Prostate gland (tissue), 2 donors: ENCODE measurements at regions of chr7 and their contacts with region 1.

Region 1: DNA sequence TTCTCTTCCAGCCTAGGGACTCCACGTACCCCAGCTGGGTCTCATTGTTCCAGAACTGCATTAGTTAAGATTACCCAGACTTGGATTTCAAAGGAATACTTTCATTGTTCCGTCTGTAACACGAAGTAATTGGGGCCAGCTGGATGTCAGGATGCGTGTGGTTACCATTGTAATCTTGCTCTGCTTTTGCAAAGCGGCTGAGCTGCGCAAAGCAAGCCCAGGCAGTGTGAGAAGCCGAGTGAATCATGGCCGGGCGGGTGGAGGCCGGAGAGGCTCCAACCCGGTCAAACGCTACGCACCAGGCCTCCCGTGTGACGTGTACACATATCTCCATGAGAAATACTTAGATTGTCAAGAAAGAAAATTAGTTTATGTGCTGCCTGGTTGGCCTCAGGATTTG is 21.0 kb downstream of the LRRC17 start:
- DNase-seq: peak; percentile 19
- H3K4me3 ChIP-seq: no peak overlapping the region
- H3K27ac ChIP-seq: peak overlapping the region; percentile 41 to 66
- H3K4me1 ChIP-seq: no peaks in the 10 kb centered on the region
- H3K27me3 ChIP-seq: no peaks in the 10 kb centered on the region
- CTCF ChIP-seq: no peak
- POLR2A ChIP-seq: no peak

Region 2: GRCh38 chr7:101108330-101108857 is 1825.4 kb before region 1 on chr7:
- intact Hi-C with region 1: no loop called
- DNase-seq: no peak
- H3K4me3 ChIP-seq: no peak overlapping the region
- H3K27ac ChIP-seq: no peak overlapping the region
- H3K4me1 ChIP-seq: no peaks in the 10 kb centered on the region
- H3K27me3 ChIP-seq: no peaks in the 10 kb centered on the region
- CTCF ChIP-seq: no peak
- POLR2A ChIP-seq: no peak

Region 3: DNA sequence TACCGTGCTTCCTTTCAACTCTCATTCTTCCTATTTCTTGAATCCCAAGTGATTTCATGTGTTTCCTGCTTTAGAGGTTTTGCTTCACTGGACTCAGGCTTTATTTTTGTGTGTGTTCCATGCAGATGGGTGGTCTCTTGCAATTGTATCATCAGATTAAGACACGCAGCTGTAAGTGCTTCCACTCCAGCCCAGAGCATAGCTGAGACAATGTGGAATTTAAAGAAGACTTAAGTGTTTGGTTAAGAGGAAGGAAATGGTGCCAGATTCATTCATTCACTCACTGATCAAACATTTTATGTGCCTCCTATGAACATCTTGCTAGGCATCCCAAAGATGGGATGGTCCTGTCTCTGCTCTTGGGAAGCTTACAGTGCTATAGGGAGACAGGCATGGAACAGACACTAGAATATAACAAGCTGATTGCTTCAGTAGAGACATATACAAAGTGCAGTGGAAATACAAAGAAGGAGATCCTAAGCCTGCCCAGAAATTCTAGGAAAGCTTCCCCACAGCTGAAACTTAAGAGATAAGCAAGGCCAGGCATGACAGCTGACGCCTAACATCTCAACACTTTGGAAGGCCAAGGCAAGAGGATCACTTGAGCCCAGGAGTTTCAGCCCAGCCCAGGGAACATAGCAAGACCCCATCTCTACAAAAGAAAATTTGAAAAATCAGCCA is 67.1 kb before region 1 on chr7:
- intact Hi-C with region 1: no loop called
- DNase-seq: no peak
- H3K4me3 ChIP-seq: no peak overlapping the region
- H3K27ac ChIP-seq: no peak overlapping the region
- H3K4me1 ChIP-seq: no peaks in the 10 kb centered on the region
- H3K27me3 ChIP-seq: no peaks in the 10 kb centered on the region
- CTCF ChIP-seq: no peak
- POLR2A ChIP-seq: no peak

Region 4: GRCh38 chr7:102912742-102913141 is 21.0 kb before region 1 on chr7 and contains the start of gene LRRC17:
- intact Hi-C with region 1: loop called (anchors 2 kb)
- DNase-seq: no peak
- H3K4me3 ChIP-seq: peak within 1 kb of the TSS in 1 of 2 donors; percentile 2
- H3K27ac ChIP-seq: no peak within 1 kb of the TSS
- H3K4me1 ChIP-seq: no peaks in the 10 kb centered on the region
- H3K27me3 ChIP-seq: no peaks in the 10 kb centered on the region
- CTCF ChIP-seq: no peak
- POLR2A ChIP-seq: no peak
- total RNA-seq, gene LRRC17: 1.0 to 9.8 TPM

Region 5: DNA sequence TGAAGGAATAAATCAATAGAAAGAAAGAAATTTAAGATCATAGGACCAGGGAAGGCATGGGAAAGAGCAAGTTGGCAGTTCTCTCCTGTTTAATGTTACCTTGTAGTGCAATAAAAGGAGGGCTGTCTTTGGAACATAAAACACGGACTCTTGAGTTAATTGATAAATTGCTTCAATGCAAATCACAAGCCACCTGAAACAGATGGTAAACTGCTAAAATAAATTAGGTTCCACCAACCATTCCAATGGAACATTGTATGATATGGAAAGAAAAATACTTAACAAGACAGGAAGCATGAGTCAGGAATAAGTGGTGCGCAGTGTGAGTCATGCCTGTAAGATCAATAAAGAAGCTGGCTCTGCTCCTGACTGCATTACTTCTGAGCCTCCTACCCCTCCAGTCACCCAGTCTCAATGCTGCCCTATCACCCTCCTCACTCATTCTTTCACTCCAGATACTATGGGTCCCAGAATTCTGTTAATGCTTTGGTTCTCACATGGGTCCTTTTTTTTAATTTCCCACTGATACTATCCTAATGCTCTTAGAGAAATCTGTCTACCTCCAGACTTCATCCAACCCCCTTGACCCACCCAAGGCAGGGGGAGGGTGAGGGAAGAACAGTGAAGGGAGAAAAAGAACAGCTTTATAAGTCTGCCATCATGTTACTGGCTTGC is 57.9 kb after region 1 on chr7:
- intact Hi-C with region 1: loop called (anchors 10 kb)
- DNase-seq: peak; percentile 64
- H3K4me3 ChIP-seq: no peak overlapping the region
- H3K27ac ChIP-seq: peak overlapping the region in 1 of 2 donors; percentile 82
- H3K4me1 ChIP-seq: peaks cover 12% of the 10 kb centered on the region
- H3K27me3 ChIP-seq: no peaks in the 10 kb centered on the region
- CTCF ChIP-seq: no peak
- POLR2A ChIP-seq: no peak

Region 6: DNA sequence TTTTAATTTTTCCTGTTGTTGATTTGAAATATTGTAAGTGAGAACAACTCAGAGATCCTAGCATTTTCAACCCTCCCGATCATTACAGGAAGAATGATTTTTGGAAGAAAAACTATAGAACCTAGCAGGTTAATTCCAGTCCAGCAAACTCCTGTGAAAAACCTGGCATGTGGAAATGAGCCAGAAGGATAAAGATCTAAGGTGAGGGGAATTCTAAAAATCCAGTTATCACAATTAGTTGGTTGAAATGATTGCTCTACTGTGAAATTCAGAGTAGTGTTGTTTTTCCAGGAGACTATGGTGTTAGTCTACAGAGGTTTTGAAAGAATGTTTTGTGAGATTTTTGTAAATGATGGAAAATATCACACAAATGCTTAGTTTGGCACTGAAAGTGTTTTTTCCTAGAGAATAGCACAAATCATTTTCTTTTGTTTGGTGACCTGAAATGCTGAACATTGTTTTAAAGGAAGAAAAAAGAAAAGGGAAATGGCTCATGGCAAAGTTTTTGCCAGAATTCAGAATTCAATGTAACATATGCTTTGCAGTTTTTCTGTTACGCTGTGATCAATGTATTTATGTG is 664.7 kb after region 1 on chr7:
- intact Hi-C with region 1: no loop called
- DNase-seq: no peak
- H3K4me3 ChIP-seq: no peak overlapping the region
- H3K27ac ChIP-seq: no peak overlapping the region
- H3K4me1 ChIP-seq: no peaks in the 10 kb centered on the region
- H3K27me3 ChIP-seq: no peaks in the 10 kb centered on the region
- CTCF ChIP-seq: no peak
- POLR2A ChIP-seq: no peak